GM12878 (cell line): ENCODE measurements at regions of chr10 and their contacts with region 1.

Region 1: GRCh38 chr10:7525314-7526016 is 114.6 kb upstream of the SFMBT2 start:
- DNase-seq: peak; percentile 64
- ATAC-seq: peak; percentile 78
- H3K4me3 ChIP-seq: no peak overlapping the region
- H3K27ac ChIP-seq: no peak overlapping the region; the same call in 1 of the 2 replicates
- H3K4me1 ChIP-seq: peaks cover 13% of the 10 kb centered on the region
- H3K27me3 ChIP-seq: peaks cover 0 to 6% of the 10 kb centered on the region in 2 experiments; a peak in 1 of 4 replicates
- CTCF ChIP-seq: peak; percentile 69 to 93 (median 81)
- EP300 ChIP-seq: 0 out of 4 replicates have a peak, but pooled peaks of 1 of the 2 experiments have one; percentile 5
- POLR2A ChIP-seq: no peak
- RAD21 ChIP-seq: peak; percentile 95

Region 2: DNA sequence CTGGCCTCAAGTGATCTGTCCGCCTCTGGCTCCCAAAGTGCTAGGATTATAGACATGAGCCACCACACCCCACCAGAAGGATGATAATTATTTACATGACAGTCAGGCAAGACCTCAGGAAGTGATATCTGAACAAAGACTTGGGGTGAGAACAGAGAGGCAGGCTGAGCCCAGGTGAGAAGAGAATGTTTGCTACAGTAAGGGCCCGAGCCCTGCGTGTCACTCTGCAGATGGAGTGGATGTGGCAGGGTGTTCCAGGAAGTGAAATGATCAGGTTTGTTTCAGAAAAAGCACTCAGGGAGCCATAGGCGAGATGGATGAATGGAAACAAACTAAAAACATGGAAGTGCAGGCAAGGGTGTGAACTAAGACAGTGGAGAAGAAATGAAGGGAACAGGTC is 136.9 kb before region 1 on chr10:
- CTCF ChIA-PET with region 1: no interaction called
- POLR2A ChIA-PET with region 1: no interaction called
- RAD21 ChIA-PET with region 1: no interaction called
- SMC1A ChIA-PET with region 1: no interaction called
- in situ Hi-C with region 1: no loop called
- intact Hi-C with region 1: no loop called
- DNase-seq: no peak
- ATAC-seq: peak; percentile 40
- H3K4me3 ChIP-seq: no peak overlapping the region
- H3K27ac ChIP-seq: no peak overlapping the region
- H3K4me1 ChIP-seq: peaks cover 15% of the 10 kb centered on the region; the same call in 1 of the 2 replicates
- H3K27me3 ChIP-seq: no peaks in the 10 kb centered on the region
- CTCF ChIP-seq: no peak
- EP300 ChIP-seq: no peak
- POLR2A ChIP-seq: no peak
- RAD21 ChIP-seq: no peak

Region 3: DNA sequence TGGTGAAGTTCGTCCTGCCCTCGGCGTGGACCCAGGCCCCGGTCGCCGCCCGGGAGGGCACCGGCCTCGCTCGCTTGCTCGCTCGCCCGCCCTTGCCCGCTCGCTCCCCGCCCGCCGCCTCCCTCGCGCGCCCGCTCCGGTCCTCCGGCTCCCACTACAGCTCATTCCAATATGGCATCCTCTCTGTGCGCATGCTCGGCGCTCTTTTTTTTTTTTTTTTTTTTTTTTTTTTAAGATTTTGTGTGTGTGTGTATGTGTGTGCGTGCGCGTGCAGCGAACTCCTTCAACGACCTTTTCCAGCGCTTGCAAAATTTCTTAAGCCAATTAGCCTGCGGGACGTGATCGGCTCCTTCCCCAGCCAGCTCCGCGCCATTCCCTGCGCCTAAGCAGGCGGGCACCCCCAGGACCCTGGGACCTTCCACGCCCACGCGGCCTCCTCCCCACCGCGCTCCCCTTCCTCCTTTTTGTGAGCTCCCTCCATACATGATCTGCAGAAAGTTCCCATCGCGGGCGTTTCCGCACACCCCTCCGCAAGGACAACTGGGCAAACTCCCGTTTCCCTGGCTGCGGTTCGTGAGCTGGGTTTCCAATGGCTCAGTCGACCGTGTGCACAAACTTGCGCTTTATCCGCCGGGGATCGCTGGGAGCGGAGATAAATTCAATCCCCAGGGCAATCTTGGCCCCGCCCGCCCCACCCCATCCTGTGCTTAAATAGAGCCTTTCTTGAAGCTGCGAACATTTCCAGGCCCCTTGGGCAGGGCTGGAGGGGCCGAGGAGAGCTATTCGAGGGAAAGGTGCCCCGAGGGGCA is 114.4 kb before region 1 on chr10 and contains the start of gene SFMBT2:
- CTCF ChIA-PET with region 1: interaction called, 12 read pairs
- POLR2A ChIA-PET with region 1: interaction called, 4 read pairs
- RAD21 ChIA-PET with region 1: interaction called, 10 read pairs
- SMC1A ChIA-PET with region 1: interaction called, 6 read pairs
- in situ Hi-C with region 1: no loop called
- intact Hi-C with region 1: loop called (anchors 5 kb)
- DNase-seq: no peak
- ATAC-seq: peak; percentile 59
- H3K4me3 ChIP-seq: peak within 1 kb of the TSS; percentile 100
- H3K27ac ChIP-seq: peak within 1 kb of the TSS; percentile 86
- H3K4me1 ChIP-seq: peaks cover 15% of the 10 kb centered on the region
- H3K27me3 ChIP-seq: no peaks in the 10 kb centered on the region
- CTCF ChIP-seq: 0 out of 6 replicates have a peak, but pooled peaks of 1 of the 3 experiments have one; percentile 7
- EP300 ChIP-seq: no peak
- POLR2A ChIP-seq: no peak; the same call in 1 of the 2 replicates
- RAD21 ChIP-seq: 0 out of 2 replicates have a peak, but pooled peaks have one; percentile 9
- polyA plus RNA-seq, gene SFMBT2: 2.8 to 4.3 TPM

Region 4: GRCh38 chr10:7445474-7446185 is 79.8 kb before region 1 on chr10:
- CTCF ChIA-PET with region 1: interaction called, 11 read pairs
- POLR2A ChIA-PET with region 1: interaction called, 3 read pairs
- RAD21 ChIA-PET with region 1: interaction called, 3 read pairs
- SMC1A ChIA-PET with region 1: interaction called, 5 read pairs
- in situ Hi-C with region 1: no loop called
- intact Hi-C with region 1: no loop called
- DNase-seq: no peak
- ATAC-seq: peak; percentile 90
- H3K4me3 ChIP-seq: no peak overlapping the region
- H3K27ac ChIP-seq: peak overlapping the region; percentile 85
- H3K4me1 ChIP-seq: peaks cover 21% of the 10 kb centered on the region
- H3K27me3 ChIP-seq: no peaks in the 10 kb centered on the region
- CTCF ChIP-seq: no peak
- EP300 ChIP-seq: peak; percentile 8 to 69; a peak in 3 of 4 replicates
- POLR2A ChIP-seq: no peak
- RAD21 ChIP-seq: no peak

Region 5: DNA sequence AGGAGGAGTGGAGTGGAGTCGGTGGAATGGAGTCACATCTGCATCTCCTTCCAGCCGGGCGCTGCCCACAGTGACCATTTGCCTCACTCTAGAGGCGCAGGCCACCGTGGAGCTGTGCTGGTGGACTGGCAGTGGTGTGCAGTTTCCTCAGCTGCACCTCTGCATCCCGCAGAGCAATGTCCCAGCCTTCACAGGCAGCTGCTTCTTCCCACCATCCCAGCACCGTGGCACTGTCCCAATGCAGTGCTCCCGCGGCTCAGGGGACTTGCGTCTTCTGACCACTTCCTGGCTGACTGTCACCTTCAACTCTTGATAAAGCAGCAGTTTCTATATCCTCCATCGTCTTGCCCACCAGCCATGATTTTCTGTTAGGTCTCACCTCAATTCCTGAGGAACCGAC is 24.3 kb before region 1 on chr10:
- CTCF ChIA-PET with region 1: interaction called, 9 read pairs
- POLR2A ChIA-PET with region 1: no interaction called
- RAD21 ChIA-PET with region 1: interaction called, 5 read pairs
- SMC1A ChIA-PET with region 1: interaction called, 10 read pairs
- in situ Hi-C with region 1: no loop called
- intact Hi-C with region 1: no loop called
- DNase-seq: no peak
- ATAC-seq: peak; percentile 41
- H3K4me3 ChIP-seq: no peak overlapping the region
- H3K27ac ChIP-seq: no peak overlapping the region
- H3K4me1 ChIP-seq: peaks cover 8% of the 10 kb centered on the region
- H3K27me3 ChIP-seq: no peaks in the 10 kb centered on the region
- CTCF ChIP-seq: no peak
- EP300 ChIP-seq: no peak
- POLR2A ChIP-seq: no peak
- RAD21 ChIP-seq: no peak

Region 6: GRCh38 chr10:7756360-7756992 is 231.0 kb after region 1 on chr10:
- CTCF ChIA-PET with region 1: interaction called, 15 read pairs
- POLR2A ChIA-PET with region 1: no interaction called
- RAD21 ChIA-PET with region 1: interaction called, 10 read pairs
- SMC1A ChIA-PET with region 1: interaction called, 9 read pairs
- in situ Hi-C with region 1: no loop called
- intact Hi-C with region 1: loop called (anchors 1 kb)
- DNase-seq: no peak
- ATAC-seq: peak; percentile 83
- H3K4me3 ChIP-seq: no peak overlapping the region
- H3K27ac ChIP-seq: no peak overlapping the region
- H3K4me1 ChIP-seq: no peaks in the 10 kb centered on the region
- H3K27me3 ChIP-seq: no peaks in the 10 kb centered on the region
- CTCF ChIP-seq: peak; percentile 50 to 61 (median 53)
- EP300 ChIP-seq: no peak
- POLR2A ChIP-seq: no peak
- RAD21 ChIP-seq: peak; percentile 34

Region 7: DNA sequence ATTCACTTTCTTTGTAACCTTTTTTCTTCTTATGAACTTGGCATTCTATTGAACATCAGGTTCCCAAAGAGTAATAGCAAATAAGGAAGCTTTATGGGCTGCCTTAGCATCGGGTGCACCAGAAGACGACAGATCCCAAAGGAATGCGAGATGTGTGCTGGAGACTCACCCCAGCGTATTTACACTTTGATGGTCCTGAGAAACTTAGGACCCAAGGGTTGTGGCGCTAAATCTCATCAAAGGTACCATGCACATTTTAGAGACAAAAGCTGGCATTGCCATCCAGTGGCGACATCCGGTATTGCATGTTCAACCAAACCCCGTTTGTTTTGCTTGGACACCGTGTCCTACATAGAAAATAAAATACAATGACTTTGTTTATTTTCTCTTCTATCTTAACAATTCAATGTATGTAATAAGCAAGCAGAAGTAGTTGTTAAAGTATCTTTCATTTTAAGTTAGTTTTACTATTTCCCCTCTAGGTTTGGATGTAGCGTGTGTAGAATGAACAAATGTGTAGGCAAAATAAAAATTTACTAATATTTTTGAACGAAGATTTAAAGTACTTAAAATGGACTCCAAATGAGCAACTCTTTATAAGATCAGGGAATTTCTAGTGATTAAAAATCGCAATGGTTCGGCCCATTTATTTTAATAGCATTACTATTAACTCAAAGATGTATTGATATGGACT is 1683.8 kb after region 1 on chr10:
- CTCF ChIA-PET with region 1: interaction called, 30 read pairs
- POLR2A ChIA-PET with region 1: no interaction called
- RAD21 ChIA-PET with region 1: interaction called, 25 read pairs
- SMC1A ChIA-PET with region 1: interaction called, 11 read pairs
- in situ Hi-C with region 1: loop called (anchors 10 kb)
- intact Hi-C with region 1: loop called (anchors 1 kb)
- DNase-seq: peak; percentile 16
- ATAC-seq: peak; percentile 78
- H3K4me3 ChIP-seq: no peak overlapping the region
- H3K27ac ChIP-seq: no peak overlapping the region
- H3K4me1 ChIP-seq: no peaks in the 10 kb centered on the region
- H3K27me3 ChIP-seq: no peaks in the 10 kb centered on the region
- CTCF ChIP-seq: peak; percentile 82 to 87 (median 86)
- EP300 ChIP-seq: no peak
- POLR2A ChIP-seq: no peak
- RAD21 ChIP-seq: peak; percentile 87